Ovary (tissue), 10 donors: ENCODE measurements at regions of chr1 and their contacts with region 1.

Region 1: DNA sequence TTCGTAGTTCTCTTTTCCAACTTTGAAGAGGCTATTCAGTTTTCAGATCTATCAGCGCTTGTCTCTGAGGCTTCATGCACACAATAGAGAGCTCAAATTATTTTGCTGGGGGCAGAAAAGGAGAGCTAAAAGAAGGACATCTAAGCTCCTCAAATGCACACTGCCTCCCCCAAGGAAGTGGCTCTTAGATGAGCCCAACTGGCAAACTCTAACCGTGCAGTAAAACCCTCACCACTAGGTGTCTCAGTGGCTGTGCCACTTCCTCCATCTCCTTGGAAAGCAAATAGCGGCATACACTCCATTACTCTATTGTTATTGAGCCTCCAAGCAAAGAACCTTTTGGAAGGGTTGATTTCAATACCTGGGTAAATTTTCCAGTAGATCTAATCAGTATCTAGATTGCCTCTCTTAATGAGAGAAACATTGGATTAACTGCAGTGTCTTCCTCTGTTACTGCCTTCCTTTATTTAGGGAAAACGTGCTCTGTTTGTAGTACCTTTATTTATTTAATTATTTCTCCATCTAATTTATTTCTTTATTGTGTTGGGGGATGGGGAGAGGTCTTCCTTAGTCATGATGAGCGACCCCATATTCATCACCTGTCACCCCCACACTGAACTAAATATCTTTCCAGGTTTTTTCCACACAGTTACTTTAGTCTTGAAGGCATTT is 9.2 kb upstream of the SFPQ start:
- DNase-seq: peak; percentile 57 to 77 (median 61)
- H3K4me3 ChIP-seq: no peak overlapping the region
- H3K27ac ChIP-seq: no peak overlapping the region
- H3K4me1 ChIP-seq: no peaks in the 10 kb centered on the region
- H3K27me3 ChIP-seq: no peaks in the 10 kb centered on the region
- CTCF ChIP-seq: peak; percentile 71 to 76 (median 73)
- EP300 ChIP-seq: no peak
- POLR2A ChIP-seq: no peak

Region 2: GRCh38 chr1:34597877-34598514 is 604.2 kb before region 1 on chr1:
- intact Hi-C with region 1: no loop called
- DNase-seq: peak in 3 of 5 donors; percentile 11 to 35 (median 16)
- H3K4me3 ChIP-seq: no peak overlapping the region
- H3K27ac ChIP-seq: no peak overlapping the region
- H3K4me1 ChIP-seq: no peaks in the 10 kb centered on the region
- H3K27me3 ChIP-seq: no peaks in the 10 kb centered on the region
- CTCF ChIP-seq: no peak
- EP300 ChIP-seq: no peak
- POLR2A ChIP-seq: no peak

Region 3: GRCh38 chr1:35278886-35279554 is 76.8 kb after region 1 on chr1:
- intact Hi-C with region 1: no loop called
- DNase-seq: no peak
- H3K4me3 ChIP-seq: no peak overlapping the region
- H3K27ac ChIP-seq: no peak overlapping the region
- H3K4me1 ChIP-seq: peaks cover 3% of the 10 kb centered on the region
- H3K27me3 ChIP-seq: no peaks in the 10 kb centered on the region
- CTCF ChIP-seq: no peak
- EP300 ChIP-seq: no peak
- POLR2A ChIP-seq: no peak

Region 4: DNA sequence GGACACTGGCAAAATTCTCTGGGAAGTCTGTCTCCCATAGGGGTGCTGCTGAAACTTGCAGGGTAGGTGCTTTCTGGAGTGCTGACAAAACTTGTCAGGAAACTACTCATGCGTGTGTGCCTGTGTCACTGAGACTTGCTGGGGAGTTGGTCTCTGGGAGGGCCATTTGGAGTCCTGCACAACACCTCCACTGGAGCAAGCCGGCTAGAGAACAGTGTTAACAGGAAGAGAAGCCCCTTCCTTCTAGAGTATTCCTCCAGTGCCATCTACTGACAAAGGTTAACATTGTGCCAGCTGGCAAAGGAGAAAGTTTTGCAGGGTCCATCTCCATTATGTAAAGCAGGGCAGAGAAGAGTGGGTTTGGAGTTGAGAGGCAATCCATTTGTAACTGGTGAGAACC is 96.3 kb after region 1 on chr1:
- intact Hi-C with region 1: loop called in 2 of 4 experiments (anchors 5 to 10 kb)
- DNase-seq: peak in 2 of 5 donors; percentile 15 to 31
- H3K4me3 ChIP-seq: no peak overlapping the region
- H3K27ac ChIP-seq: no peak overlapping the region
- H3K4me1 ChIP-seq: peaks cover 1% of the 10 kb centered on the region
- H3K27me3 ChIP-seq: no peaks in the 10 kb centered on the region
- CTCF ChIP-seq: peak; percentile 21 to 30 (median 23)
- EP300 ChIP-seq: no peak
- POLR2A ChIP-seq: no peak